ENCODE measurements at regions of chr2 and their contacts with region 1.

Region 1: GRCh38 chr2:68467077-68467960 is at the starts of genes APLF and FBXO48:
- DNase-seq: peak; percentile 99
- H3K4me3 Mint-ChIP-seq: peak within 1 kb of the TSS; percentile 94
- H3K27ac Mint-ChIP-seq: peak within 1 kb of the TSS; percentile 96
- H3K4me1 Mint-ChIP-seq: peaks cover 49% of the 10 kb centered on the region
- H3K27me3 Mint-ChIP-seq: no peaks in the 10 kb centered on the region

Region 2: GRCh38 chr2:68452168-68452900 is 15.0 kb before region 1 on chr2:
- CTCF ChIA-PET with region 1: interaction called, 10 read pairs
- DNase-seq: no peak
- H3K4me3 Mint-ChIP-seq: no peak overlapping the region
- H3K27ac Mint-ChIP-seq: peak overlapping the region; percentile 1
- H3K4me1 Mint-ChIP-seq: peaks cover 7% of the 10 kb centered on the region
- H3K27me3 Mint-ChIP-seq: peaks cover 1% of the 10 kb centered on the region

Region 3: GRCh38 chr2:68487773-68488355 is 20.5 kb after region 1 on chr2:
- CTCF ChIA-PET with region 1: interaction called, 14 read pairs
- DNase-seq: no peak
- H3K4me3 Mint-ChIP-seq: no peak overlapping the region
- H3K27ac Mint-ChIP-seq: no peak overlapping the region
- H3K4me1 Mint-ChIP-seq: peaks cover 3% of the 10 kb centered on the region
- H3K27me3 Mint-ChIP-seq: no peaks in the 10 kb centered on the region

Region 4: GRCh38 chr2:68594674-68595492 is 127.6 kb after region 1 on chr2:
- CTCF ChIA-PET with region 1: interaction called, 21 read pairs
- DNase-seq: peak; percentile 65
- H3K4me3 Mint-ChIP-seq: no peak overlapping the region
- H3K27ac Mint-ChIP-seq: no peak overlapping the region
- H3K4me1 Mint-ChIP-seq: peaks cover 9% of the 10 kb centered on the region
- H3K27me3 Mint-ChIP-seq: peaks cover 18% of the 10 kb centered on the region

Region 5: GRCh38 chr2:68632021-68632420 is 164.7 kb after region 1 on chr2:
- CTCF ChIA-PET with region 1: no interaction called
- DNase-seq: no peak
- H3K4me3 Mint-ChIP-seq: no peak overlapping the region
- H3K27ac Mint-ChIP-seq: no peak overlapping the region
- H3K4me1 Mint-ChIP-seq: no peaks in the 10 kb centered on the region
- H3K27me3 Mint-ChIP-seq: peaks cover 41% of the 10 kb centered on the region

Region 6: DNA sequence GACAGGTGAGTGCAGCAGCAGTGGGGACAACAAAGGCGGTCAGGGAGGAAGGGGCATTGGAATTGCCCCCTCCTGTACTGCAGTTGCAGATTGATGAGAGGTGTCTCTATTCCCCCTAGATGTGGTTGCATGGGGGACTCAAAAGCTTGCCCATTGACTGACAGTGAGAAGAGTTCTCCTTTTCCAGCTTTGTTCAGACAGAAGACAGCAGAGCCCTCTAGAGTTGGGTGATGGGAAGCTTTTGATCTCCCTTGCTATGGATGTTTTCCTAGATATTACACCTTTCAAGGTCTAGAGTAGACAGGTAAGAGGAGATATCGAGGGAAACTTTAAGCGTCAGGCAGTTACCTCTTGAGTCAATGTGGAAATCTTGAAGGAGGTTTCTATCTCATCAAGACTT is 179.0 kb after region 1 on chr2:
- CTCF ChIA-PET with region 1: interaction called, 25 read pairs
- DNase-seq: no peak
- H3K4me3 Mint-ChIP-seq: no peak overlapping the region
- H3K27ac Mint-ChIP-seq: no peak overlapping the region
- H3K4me1 Mint-ChIP-seq: peaks cover 13% of the 10 kb centered on the region
- H3K27me3 Mint-ChIP-seq: peaks cover 81% of the 10 kb centered on the region

Region 7: DNA sequence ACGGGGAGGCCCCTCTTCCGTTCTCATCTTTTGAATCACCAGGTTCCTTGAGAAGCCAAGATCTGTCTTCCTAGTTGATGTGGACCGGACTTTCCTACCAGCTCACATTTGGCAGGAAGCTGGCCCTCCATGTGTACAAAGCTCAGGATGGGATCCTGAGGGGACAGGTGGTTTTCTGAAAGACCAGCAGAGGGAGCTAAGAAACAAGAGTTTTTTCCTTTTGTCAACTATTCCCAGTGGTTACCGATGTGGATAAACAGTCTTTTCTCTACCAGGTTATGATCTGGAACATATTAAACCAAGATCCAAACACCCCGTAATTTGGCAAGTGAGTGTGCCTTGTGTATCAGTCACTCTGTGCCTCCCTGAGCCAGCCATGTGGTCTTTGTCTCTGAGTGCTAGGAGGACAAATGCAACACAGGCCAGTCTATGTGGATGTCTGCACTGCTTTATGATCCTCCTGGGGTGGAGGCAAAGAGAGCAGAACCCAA is 242.1 kb after region 1 on chr2:
- CTCF ChIA-PET with region 1: interaction called, 30 read pairs
- DNase-seq: no peak
- H3K4me3 Mint-ChIP-seq: no peak overlapping the region
- H3K27ac Mint-ChIP-seq: no peak overlapping the region
- H3K4me1 Mint-ChIP-seq: peaks cover 32% of the 10 kb centered on the region
- H3K27me3 Mint-ChIP-seq: no peaks in the 10 kb centered on the region

Region 8: GRCh38 chr2:68715353-68716041 is 248.2 kb after region 1 on chr2:
- CTCF ChIA-PET with region 1: interaction called, 30 read pairs
- DNase-seq: peak; percentile 38
- H3K4me3 Mint-ChIP-seq: no peak overlapping the region
- H3K27ac Mint-ChIP-seq: peak overlapping the region; percentile 84
- H3K4me1 Mint-ChIP-seq: peaks cover 81% of the 10 kb centered on the region
- H3K27me3 Mint-ChIP-seq: no peaks in the 10 kb centered on the region

Measured in activated naive CD4-positive, alpha-beta T cell treated with anti-CD3 and anti-CD28 coated beads, Interleukin-2, amount 10 ng/mL, durations not matched to agents 7 days and 5 days (primary cell).